Vagina (tissue), 2 donors: ENCODE measurements at regions of chr4 and their contacts with region 1.

Region 1: DNA sequence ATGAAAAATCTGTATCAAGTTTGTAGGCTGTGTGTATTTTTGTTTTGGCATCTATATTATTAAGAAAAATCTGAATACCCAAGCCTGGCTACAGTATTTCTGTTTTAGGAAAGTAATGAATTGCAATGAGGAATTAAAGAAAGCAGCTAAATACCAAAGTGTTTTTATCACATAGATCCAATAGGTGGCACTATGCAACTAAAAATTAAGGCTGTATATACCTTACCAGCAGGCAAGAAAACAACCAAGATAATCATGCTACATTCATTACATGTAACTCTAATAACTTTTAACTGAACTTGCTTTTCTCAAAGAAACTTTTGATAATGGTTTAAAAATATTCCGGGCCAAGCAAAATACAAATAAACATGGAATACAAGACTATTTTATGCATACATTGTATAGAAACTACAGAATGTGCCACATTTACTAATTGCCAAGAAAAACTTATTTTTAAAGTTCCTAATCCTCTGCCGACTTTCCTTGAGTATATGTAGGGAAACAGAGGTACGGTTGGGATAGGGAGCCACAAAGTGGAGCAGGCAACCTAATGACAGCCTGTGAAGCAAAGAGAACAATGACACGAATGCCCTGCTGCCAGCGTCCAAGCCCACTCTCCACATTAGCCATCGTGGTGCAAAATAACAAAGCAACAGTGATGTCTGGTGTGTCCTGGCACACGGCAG is 63.7 kb downstream of the SEC24D start:
- DNase-seq: no peak
- H3K4me3 ChIP-seq: no peak overlapping the region
- H3K27ac ChIP-seq: peak overlapping the region; percentile 89
- H3K4me1 ChIP-seq: peaks cover 54% of the 10 kb centered on the region
- H3K27me3 ChIP-seq: no peaks in the 10 kb centered on the region
- CTCF ChIP-seq: peak in 2 of 3 experiments; percentile 52 to 62
- POLR2A ChIP-seq: no peak

Region 2: GRCh38 chr4:118835571-118836300 is 63.5 kb after region 1 on chr4 and contains the start of gene SEC24D:
- intact Hi-C with region 1: loop called (anchors 10 kb)
- DNase-seq: no peak
- H3K4me3 ChIP-seq: peak within 1 kb of the TSS; percentile 70 to 100
- H3K27ac ChIP-seq: peak within 1 kb of the TSS; percentile 93
- H3K4me1 ChIP-seq: peaks cover 44% of the 10 kb centered on the region
- H3K27me3 ChIP-seq: no peaks in the 10 kb centered on the region
- CTCF ChIP-seq: no peak
- POLR2A ChIP-seq: peak in 1 of 2 donors; percentile 90
- total RNA-seq, gene SEC24D: 24.1 TPM

Region 3: GRCh38 chr4:118968005-118968404 is 195.8 kb after region 1 on chr4:
- intact Hi-C with region 1: loop called (anchors 2 kb)
- DNase-seq: no peak
- H3K4me3 ChIP-seq: no peak overlapping the region
- H3K27ac ChIP-seq: peak overlapping the region; percentile 75
- H3K4me1 ChIP-seq: peaks cover 50% of the 10 kb centered on the region
- H3K27me3 ChIP-seq: no peaks in the 10 kb centered on the region
- CTCF ChIP-seq: no peak
- POLR2A ChIP-seq: no peak

Region 4: GRCh38 chr4:119268451-119268850 is 496.2 kb after region 1 on chr4:
- intact Hi-C with region 1: no loop called
- DNase-seq: no peak
- H3K4me3 ChIP-seq: no peak overlapping the region
- H3K27ac ChIP-seq: no peak overlapping the region
- H3K4me1 ChIP-seq: no peaks in the 10 kb centered on the region
- H3K27me3 ChIP-seq: no peaks in the 10 kb centered on the region
- CTCF ChIP-seq: no peak
- POLR2A ChIP-seq: no peak